ENCODE measurements at regions of chr6 and their contacts with region 1.

Region 1: DNA sequence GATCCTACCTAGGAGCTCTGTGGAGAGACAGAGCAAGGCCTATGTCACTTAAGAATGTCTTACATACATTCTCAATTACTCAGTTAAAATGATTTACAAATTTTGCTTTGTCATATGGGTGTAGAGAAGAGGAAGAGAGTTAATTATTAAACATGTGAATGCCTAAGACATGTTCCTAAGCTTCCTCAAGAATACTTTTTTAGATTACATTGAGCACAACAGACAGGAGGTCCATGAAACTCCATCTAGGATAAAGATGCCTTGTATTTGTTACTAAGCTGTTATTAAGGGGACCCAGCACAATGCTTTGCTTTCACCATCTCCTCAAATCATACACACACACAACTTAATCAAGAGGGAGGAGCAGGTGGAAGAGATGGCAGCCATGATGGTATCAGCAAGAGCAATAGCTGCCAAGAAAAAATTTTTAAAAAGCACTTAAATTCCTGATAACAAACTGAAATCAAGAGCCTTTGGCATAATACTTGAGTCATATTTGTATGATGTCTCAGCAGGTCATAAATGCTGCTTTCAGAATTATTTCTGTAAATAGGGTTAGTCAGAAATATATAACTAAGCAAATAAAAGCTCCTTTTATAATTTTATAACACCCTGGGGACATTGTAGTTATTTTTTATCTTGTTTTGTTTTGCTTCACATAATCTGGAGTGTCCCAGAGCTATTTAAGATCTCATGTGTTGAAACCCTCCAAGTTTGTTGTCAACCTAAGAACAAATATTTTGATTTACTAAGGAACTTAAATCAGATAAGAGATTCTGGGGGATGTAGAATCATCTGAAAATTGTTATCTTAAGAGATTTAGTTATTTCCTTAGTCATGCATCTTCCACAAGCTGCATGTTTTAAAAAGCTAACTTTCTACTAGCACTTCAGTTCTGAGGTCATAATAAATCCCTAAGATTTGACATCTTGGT is 70.0 kb upstream of the CD2AP start:
- DNase-seq: no peak
- H3K4me3 Mint-ChIP-seq: peak overlapping the region; percentile 32
- H3K27ac Mint-ChIP-seq: peak overlapping the region; percentile 91
- H3K4me1 Mint-ChIP-seq: peaks cover 28% of the 10 kb centered on the region
- H3K27me3 Mint-ChIP-seq: no peaks in the 10 kb centered on the region
- CTCF ChIP-seq: no peak

Region 2: GRCh38 chr6:47103931-47104330 is 303.7 kb before region 1 on chr6:
- CTCF ChIA-PET with region 1: no interaction called
- intact Hi-C with region 1: loop called (anchors 5 kb)
- DNase-seq: peak; percentile 49
- H3K4me3 Mint-ChIP-seq: no peak overlapping the region
- H3K27ac Mint-ChIP-seq: peak overlapping the region; percentile 88
- H3K4me1 Mint-ChIP-seq: peaks cover 83% of the 10 kb centered on the region
- H3K27me3 Mint-ChIP-seq: no peaks in the 10 kb centered on the region
- CTCF ChIP-seq: no peak

Region 3: DNA sequence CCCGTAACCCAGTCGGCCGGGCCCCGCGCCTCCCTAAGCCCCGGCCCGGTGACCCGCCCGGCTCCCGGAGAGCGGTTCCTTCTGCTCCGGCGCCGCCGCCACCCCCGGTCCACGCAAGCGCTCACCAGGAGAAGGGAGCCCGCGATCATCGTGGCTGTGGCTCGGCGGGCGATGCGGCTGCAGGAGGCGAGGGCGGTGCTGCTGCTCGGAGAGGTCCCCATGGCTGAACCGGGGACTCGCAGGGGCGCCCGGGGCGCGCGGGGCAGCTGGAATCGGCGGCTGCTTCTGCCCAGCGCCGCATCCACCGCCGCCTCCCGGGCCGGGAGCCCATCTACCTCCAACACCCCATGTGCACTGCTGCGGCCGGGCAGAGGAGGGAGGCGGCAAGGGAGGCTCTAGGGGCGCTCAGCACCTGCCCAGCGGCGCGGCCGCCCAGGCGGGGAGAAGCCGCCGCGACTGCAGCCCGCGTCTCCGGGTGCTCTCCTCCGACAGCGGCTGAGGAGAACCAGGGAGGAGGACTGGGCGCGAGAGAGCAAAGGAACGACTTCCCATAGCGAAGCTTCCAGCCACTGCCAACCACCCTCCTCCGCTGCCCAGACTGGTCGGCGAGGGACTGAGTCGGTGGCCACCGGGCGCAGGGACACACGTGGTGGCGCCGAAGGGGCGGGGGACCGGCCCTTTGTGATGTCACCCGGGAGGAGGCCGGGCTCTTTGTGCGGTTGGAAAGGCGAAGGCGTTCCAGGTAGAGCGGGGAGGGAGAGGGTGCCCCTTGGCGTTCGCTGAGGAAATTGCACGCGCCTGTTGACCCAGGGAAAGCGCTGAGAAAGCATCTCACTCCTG is 98.1 kb before region 1 on chr6 and contains the start of gene TNFRSF21:
- CTCF ChIA-PET with region 1: interaction called, 7 read pairs
- intact Hi-C with region 1: loop called (anchors 2 kb)
- DNase-seq: peak; percentile 97
- H3K4me3 Mint-ChIP-seq: peak within 1 kb of the TSS; percentile 98
- H3K27ac Mint-ChIP-seq: peak within 1 kb of the TSS; percentile 96
- H3K4me1 Mint-ChIP-seq: peaks cover 31% of the 10 kb centered on the region
- H3K27me3 Mint-ChIP-seq: no peaks in the 10 kb centered on the region
- CTCF ChIP-seq: peak; percentile 85
- total RNA-seq, gene TNFRSF21: 255 and 282 TPM in 2 replicates

Region 4: GRCh38 chr6:48116699-48117645 is 709.4 kb after region 1 on chr6:
- CTCF ChIA-PET with region 1: no interaction called
- intact Hi-C with region 1: no loop called
- DNase-seq: no peak
- H3K4me3 Mint-ChIP-seq: no peak overlapping the region
- H3K27ac Mint-ChIP-seq: no peak overlapping the region
- H3K4me1 Mint-ChIP-seq: no peaks in the 10 kb centered on the region
- H3K27me3 Mint-ChIP-seq: no peaks in the 10 kb centered on the region
- CTCF ChIP-seq: no peak

Measured in Calu3 (cell line).